Head of caudate nucleus (tissue), 42 donors: ENCODE measurements at regions of chr4 and their contacts with region 1.

Region 1: GRCh38 chr4:114598191-114599121 is at the start of gene UGT8:
- DNase-seq: peak; percentile 60 to 93 (median 80)

Region 2: GRCh38 chr4:114535725-114536124 is 62.7 kb before region 1 on chr4:
- intact Hi-C with region 1: loop called (anchors 10 kb)
- DNase-seq: peak in 2 of 42 donors; percentile 17 to 29

Region 3: DNA sequence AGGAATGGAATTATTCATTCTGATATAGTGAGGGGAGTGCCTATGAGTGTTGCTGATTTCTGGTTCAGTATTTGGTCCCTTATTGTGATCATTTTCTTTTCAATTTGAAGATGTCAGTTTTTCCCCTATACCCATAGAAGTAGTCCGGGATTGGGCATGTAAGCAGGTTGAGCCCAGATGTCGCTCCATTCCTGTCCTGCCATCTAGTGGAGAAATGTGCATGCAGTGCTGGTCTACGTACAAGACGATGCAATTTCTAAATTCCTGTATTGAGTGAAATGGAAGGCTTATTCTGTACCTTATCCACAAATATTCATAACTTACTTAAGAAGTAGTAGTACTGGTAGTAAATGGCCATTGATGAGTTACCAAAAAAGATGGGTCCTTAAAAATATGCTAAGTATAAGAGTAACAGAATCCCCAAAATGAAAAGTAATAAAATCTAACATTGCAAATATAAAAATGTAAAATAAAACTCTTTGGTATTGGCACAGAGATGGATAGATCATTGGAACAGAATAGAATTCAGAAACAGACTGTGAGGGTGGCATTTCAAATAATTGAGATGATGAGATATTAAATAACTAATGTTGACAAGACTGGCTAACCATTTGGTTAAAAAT is 61.0 kb after region 1 on chr4:
- intact Hi-C with region 1: loop called (anchors 2 kb)
- DNase-seq: peak; percentile 53 to 93 (median 82)

Region 4: DNA sequence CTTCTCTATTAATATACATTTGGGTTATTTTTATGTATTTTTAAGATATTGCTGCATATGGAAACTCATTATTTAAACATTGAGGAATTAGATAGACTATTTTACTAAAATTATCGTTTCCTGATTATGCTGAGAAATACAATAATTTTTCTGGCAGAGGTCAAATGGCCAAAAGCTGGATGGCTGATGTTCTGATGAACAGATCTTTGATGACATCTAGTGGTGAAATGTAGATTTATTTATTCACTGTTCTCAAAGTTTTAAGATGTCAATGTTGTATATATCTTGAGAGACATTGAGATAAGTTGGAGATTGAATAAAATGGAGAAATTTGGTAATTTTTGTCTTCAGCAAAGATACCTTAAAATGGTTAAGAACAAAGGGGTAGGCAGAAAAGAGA is 96.3 kb after region 1 on chr4:
- intact Hi-C with region 1: no loop called
- DNase-seq: peak in 1 of 42 donors; percentile 37